Activated naive CD4-positive, alpha-beta T cell treated with anti-CD3 and anti-CD28 coated beads for 36 hours (primary cell): ENCODE measurements at regions of chr2 and their contacts with region 1.

Region 1: GRCh38 chr2:6909431-6910385 is 7.5 kb upstream of the RNF144A start:
- DNase-seq: peak; percentile 64
- H3K4me3 Mint-ChIP-seq: peak overlapping the region; percentile 65
- H3K27ac Mint-ChIP-seq: peak overlapping the region; percentile 100
- H3K4me1 Mint-ChIP-seq: peaks cover 89% of the 10 kb centered on the region
- H3K27me3 Mint-ChIP-seq: no peaks in the 10 kb centered on the region

Region 2: DNA sequence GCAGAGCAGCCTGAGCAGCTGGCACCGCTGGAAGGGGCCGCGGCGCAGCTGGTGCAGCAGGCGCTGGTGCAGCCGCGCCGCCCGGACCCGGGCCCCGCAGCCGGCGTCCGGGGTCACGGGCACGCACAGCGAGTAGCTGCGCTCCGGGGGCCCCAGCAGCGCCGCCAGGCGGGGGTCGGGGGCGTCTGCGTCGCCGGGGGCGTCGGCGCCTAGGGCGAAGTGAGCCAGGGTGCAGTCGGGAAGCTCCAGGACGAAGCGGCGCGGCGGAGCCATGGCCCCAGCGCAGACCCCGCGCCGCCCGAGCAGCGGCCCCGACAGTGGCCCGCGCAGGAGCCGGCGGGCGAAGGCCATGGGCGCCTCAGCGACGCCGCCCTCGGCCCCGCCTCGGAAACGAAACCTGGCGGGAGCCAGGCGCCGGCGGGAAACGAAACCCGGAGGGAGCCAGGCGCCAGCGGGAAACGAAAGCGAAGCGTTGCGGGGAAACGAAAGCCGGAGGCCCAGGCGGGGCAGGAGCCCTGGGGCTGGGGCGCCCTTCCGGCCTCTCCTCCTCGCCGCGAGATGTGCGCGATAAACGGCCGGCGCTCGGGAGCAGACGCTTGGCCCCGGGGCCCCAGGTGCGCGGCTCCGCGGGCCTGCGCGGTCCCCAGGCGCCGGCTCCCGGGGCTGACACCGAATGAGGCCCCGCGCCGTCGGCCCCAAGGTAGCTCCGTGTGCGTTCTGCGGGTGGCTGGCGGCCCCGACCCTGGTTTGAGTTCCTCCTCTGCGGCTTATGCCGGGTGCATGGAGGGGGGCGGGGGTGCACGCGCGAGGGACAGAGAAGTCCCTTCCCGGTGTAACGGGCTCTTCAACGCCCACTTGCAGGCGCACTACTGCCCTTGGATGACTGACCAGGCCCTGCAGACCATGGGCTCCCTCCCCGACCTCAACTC is 44.1 kb before region 1 on chr2 and contains the start of gene CMPK2:
- CTCF ChIA-PET with region 1: interaction called, 46 read pairs
- intact Hi-C with region 1: no loop called
- DNase-seq: peak; percentile 82
- H3K4me3 Mint-ChIP-seq: peak within 1 kb of the TSS; percentile 89
- H3K27ac Mint-ChIP-seq: peak within 1 kb of the TSS; percentile 77
- H3K4me1 Mint-ChIP-seq: peaks cover 17% of the 10 kb centered on the region
- H3K27me3 Mint-ChIP-seq: no peaks in the 10 kb centered on the region
- total RNA-seq, gene CMPK2: 7.2 to 7.7 TPM

Region 3: GRCh38 chr2:6896930-6897759 is 12.6 kb before region 1 on chr2:
- CTCF ChIA-PET with region 1: interaction called, 73 read pairs
- intact Hi-C with region 1: loop called (anchors 1 kb)
- DNase-seq: no peak
- H3K4me3 Mint-ChIP-seq: no peak overlapping the region
- H3K27ac Mint-ChIP-seq: peak overlapping the region; percentile 21
- H3K4me1 Mint-ChIP-seq: peaks cover 13% of the 10 kb centered on the region
- H3K27me3 Mint-ChIP-seq: no peaks in the 10 kb centered on the region

Region 4: GRCh38 chr2:7427293-7428060 is 517.8 kb after region 1 on chr2:
- CTCF ChIA-PET with region 1: no interaction called
- intact Hi-C with region 1: loop called (anchors 10 kb)
- DNase-seq: no peak
- H3K4me3 Mint-ChIP-seq: no peak overlapping the region
- H3K27ac Mint-ChIP-seq: no peak overlapping the region
- H3K4me1 Mint-ChIP-seq: peaks cover 31% of the 10 kb centered on the region
- H3K27me3 Mint-ChIP-seq: peaks cover 3% of the 10 kb centered on the region

Region 5: DNA sequence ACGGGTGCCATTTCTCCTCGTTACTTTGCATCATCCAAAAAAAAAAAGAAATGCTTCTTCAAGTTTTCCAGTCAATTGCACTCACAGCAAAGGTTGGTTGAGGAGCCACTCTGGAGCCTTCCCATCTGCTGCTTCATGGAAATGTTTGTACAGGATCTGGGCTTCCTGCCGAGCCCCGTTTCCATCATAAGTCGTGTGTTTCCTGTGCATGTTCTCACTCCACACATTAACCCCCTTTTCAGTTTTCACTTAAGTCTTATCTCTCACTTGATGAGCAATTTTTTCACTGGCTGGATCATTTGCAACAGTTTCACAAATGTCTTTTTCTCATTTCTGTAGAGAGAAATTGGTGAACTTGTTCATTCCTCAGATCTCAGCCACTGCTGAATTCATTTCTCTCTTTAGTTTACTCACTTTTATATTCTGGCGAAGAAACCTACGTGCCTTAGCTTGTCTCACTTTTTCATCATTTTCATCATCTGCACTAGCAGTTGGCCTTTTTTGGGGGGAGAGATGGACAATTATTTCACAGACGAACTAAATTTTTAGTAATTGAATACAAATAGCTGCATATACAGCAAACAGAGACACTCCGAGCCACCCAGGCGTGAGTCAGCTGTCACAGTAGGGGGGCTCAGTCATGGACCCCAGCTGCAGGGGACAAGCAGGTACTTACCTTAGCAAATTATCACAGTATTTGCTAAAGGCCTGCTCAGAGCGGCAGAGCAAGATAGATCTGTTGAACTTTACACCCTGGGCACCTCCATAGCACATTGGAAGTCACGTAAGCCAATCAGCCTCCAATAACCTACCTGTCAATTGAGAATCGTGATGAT is 1021.3 kb after region 1 on chr2:
- CTCF ChIA-PET with region 1: no interaction called
- intact Hi-C with region 1: loop called (anchors 5 kb)
- DNase-seq: peak; percentile 45
- H3K4me3 Mint-ChIP-seq: no peak overlapping the region
- H3K27ac Mint-ChIP-seq: peak overlapping the region; percentile 74
- H3K4me1 Mint-ChIP-seq: peaks cover 19% of the 10 kb centered on the region
- H3K27me3 Mint-ChIP-seq: no peaks in the 10 kb centered on the region